ENCODE measurements at regions of chr12 and their contacts with region 1.

Region 1: DNA sequence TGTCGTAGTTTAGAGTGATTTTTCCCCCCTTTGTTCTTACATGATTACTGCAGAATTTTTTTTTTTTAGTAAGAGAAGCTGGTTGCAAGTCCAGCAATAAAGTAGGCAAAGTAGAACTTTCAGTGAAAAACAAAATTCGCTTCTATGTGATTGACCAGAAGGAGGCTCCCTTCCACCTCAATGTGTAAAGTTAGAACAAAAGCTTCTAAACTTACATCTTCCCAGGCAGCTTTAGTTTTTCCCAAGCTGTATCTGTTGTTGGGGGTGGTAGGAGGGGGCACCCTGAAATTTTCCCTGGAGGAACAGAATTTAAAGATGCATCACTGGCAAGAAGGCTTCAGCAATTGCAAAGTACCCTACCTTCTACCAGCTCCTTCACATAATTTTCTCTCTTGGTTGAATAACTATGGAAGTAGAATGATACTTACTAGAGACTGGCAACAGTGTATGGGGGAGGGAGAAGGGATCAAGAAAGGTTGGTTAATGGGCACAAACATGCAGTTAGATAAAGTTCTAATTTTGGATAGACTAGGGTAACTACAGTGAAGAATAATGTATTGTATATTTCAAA is 87.3 kb upstream of the E2F7 start:
- DNase-seq: no peak
- ATAC-seq: no peak
- H3K4me3 ChIP-seq: no peak overlapping the region
- H3K27ac ChIP-seq: no peak overlapping the region
- H3K4me1 ChIP-seq: no peaks in the 10 kb centered on the region
- H3K27me3 ChIP-seq: no peaks in the 10 kb centered on the region
- CTCF ChIP-seq: peak; percentile 35

Region 2: GRCh38 chr12:77685112-77685511 is 532.4 kb after region 1 on chr12:
- intact Hi-C with region 1: loop called in 1 of 2 experiments (anchors 10 kb)
- DNase-seq: peak; percentile 19 to 43
- ATAC-seq: peak in 2 of 4 donors; percentile 71 to 73
- H3K4me3 ChIP-seq: peak overlapping the region; percentile 22
- H3K27ac ChIP-seq: no peak overlapping the region
- H3K4me1 ChIP-seq: no peaks in the 10 kb centered on the region
- H3K27me3 ChIP-seq: no peaks in the 10 kb centered on the region
- CTCF ChIP-seq: peak; percentile 46

Measured in psoas muscle (tissue), 8 donors.